ENCODE measurements at regions of chr20 and their contacts with region 1.

Region 1: GRCh38 chr20:815914-816606 is 17.5 kb upstream of the FAM110A start:
- DNase-seq: peak; percentile 70
- ATAC-seq: peak; percentile 68
- H3K4me3 ChIP-seq: no peak overlapping the region
- H3K27ac ChIP-seq: no peak overlapping the region
- H3K4me1 ChIP-seq: no peaks in the 10 kb centered on the region
- H3K27me3 ChIP-seq: no peaks in the 10 kb centered on the region
- CTCF ChIP-seq: peak; percentile 97
- EP300 ChIP-seq: no peak
- POLR2A ChIP-seq: no peak
- RAD21 ChIP-seq: peak; percentile 91

Region 2: DNA sequence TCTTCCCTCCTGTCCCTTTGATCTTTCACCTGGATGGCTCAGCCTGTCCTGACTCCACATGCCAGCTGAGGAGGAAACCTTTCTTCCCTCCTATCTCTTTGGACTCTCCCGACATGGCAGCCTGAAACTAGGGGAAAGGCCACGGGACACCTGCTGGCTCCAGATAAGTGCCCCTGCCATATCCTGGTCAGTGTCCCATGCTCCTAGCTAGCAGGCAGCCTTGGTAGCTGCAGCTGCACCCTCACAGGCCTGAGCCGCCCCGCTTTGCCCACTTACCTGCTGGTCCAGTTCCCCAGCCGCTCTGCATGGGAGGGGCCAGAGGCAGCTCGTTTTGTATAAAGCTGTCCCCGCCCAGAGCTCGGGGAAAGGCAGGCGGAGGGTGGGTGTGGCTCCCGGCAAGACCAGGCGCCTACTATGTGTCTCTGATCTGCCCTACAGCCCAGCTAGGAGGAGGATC is 40.4 kb before region 1 on chr20:
- CTCF ChIA-PET with region 1: no interaction called
- POLR2A ChIA-PET with region 1: no interaction called
- in situ Hi-C with region 1: no loop called
- intact Hi-C with region 1: no loop called
- DNase-seq: no peak
- ATAC-seq: no peak; the same call in 2 of the 3 replicates
- H3K4me3 ChIP-seq: no peak overlapping the region
- H3K27ac ChIP-seq: no peak overlapping the region
- H3K4me1 ChIP-seq: no peaks in the 10 kb centered on the region
- H3K27me3 ChIP-seq: peaks cover 4 to 60% of the 10 kb centered on the region in 2 experiments; a peak in 4 of 5 replicates
- CTCF ChIP-seq: no peak
- EP300 ChIP-seq: no peak
- POLR2A ChIP-seq: no peak
- RAD21 ChIP-seq: no peak

Region 3: DNA sequence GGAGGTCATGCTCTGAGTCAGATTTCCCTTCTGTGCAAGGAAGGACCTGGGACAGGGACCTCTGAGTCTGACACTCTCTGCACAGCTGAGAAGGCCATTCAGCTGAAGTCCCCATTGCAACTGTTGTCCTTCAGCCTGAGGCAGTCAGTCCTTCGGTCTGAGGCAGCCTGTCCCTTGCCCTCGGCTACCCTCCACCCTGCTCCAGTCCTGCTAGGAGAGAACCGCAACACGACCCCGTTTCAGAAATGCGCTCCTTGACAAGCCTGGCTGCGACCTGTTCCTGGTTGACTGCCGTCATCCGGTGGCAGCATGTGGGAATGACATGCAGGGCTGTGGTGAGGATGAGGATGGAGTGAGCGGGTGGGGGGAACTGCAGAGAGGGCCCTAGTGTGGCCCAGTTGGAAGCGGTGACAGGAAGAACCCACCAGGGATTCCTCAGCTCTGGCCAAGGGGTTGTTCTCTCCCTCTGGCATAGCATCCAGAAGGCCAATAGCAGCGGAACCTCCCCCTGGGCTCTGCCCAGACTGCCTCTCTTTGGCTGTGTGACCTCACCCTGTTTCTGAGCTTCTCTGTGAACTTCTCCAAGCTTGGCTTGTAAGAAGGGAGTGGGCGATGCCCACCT is 140.4 kb after region 1 on chr20:
- CTCF ChIA-PET with region 1: interaction called, 185 read pairs
- POLR2A ChIA-PET with region 1: interaction called, 4 read pairs
- in situ Hi-C with region 1: loop called (anchors 5 kb)
- intact Hi-C with region 1: loop called (anchors 1 kb)
- DNase-seq: peak; percentile 74
- ATAC-seq: peak; percentile 87
- H3K4me3 ChIP-seq: no peak overlapping the region
- H3K27ac ChIP-seq: no peak overlapping the region
- H3K4me1 ChIP-seq: no peaks in the 10 kb centered on the region
- H3K27me3 ChIP-seq: peaks cover 12 to 39% of the 10 kb centered on the region in 2 experiments
- CTCF ChIP-seq: peak; percentile 100
- EP300 ChIP-seq: no peak
- POLR2A ChIP-seq: no peak
- RAD21 ChIP-seq: peak; percentile 99

Region 4: DNA sequence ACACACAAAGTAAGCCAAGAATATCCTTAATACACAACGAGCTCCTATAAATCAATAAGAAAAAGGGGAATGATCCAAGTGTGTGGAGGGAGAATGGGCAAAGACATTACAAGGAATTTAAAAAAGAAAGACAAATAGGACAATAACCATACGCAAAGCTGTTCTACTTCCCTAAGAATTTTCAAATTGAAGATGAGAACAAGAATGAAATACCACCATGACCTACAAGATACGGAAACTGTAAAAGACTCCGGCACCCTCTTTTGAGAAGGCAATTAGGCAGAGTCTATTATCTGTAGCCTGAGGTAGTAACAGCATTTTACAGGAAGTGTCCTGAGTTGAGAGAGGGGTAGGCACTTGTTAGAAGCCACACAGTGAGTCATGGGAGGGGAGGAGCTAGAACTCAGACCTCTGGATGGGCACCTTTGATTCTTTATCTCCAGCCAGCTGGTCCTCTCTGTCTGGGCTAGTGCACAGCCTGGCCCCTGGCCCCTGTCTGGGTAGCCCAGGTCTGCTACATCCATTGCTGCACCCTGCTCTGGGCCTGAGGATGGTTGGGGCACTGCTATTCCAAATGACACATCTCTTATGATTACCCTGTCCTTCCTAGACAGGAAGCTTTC is 170.8 kb after region 1 on chr20:
- CTCF ChIA-PET with region 1: no interaction called
- POLR2A ChIA-PET with region 1: no interaction called
- in situ Hi-C with region 1: no loop called
- intact Hi-C with region 1: no loop called
- DNase-seq: no peak
- ATAC-seq: no peak; the same call in 2 of the 3 replicates
- H3K4me3 ChIP-seq: no peak overlapping the region
- H3K27ac ChIP-seq: no peak overlapping the region
- H3K4me1 ChIP-seq: no peaks in the 10 kb centered on the region
- H3K27me3 ChIP-seq: peaks cover 3 to 34% of the 10 kb centered on the region in 2 experiments; a peak in 4 of 5 replicates
- CTCF ChIP-seq: no peak
- EP300 ChIP-seq: no peak
- POLR2A ChIP-seq: no peak
- RAD21 ChIP-seq: no peak

Region 5: DNA sequence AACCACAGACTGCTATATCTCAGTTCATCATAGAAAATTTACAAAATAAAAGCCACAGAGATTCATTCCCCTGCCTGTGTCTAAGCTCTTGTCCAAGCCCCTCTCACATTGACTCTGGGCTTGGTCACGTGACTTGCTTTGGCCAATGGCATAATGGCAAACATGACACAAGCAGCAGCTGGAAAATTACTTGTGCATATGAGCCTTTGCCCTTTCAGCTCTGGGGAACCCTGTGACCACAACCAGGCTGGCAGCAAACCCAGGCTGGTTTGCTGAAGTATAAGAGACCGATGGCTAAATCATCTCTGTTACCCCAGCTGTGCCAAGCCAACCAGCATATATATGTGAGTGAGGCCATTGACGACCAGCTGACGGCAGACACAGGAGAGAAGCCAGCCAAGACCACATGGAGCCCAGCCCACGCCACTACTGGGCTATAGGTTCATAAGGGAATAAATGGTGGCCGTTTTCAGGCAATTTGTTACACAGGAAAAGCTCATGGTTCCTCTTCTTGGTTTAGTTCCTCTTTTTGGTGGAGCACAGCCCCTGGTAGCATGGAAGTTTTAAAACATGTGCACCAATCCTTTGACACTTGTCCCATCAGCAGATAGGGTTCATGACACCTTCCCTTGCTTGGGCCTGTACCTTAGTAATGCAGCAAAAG is 217.8 kb after region 1 on chr20:
- CTCF ChIA-PET with region 1: no interaction called
- POLR2A ChIA-PET with region 1: no interaction called
- in situ Hi-C with region 1: no loop called
- intact Hi-C with region 1: no loop called
- DNase-seq: no peak
- ATAC-seq: no peak
- H3K4me3 ChIP-seq: no peak overlapping the region
- H3K27ac ChIP-seq: no peak overlapping the region
- H3K4me1 ChIP-seq: peaks cover 12% of the 10 kb centered on the region
- H3K27me3 ChIP-seq: 0 out of 5 replicates have a peak, but pooled peaks cover 0 to 4% of the 10 kb centered on the region in 2 experiments
- CTCF ChIP-seq: no peak
- EP300 ChIP-seq: no peak
- POLR2A ChIP-seq: no peak
- RAD21 ChIP-seq: no peak

Region 6: GRCh38 chr20:1108437-1108920 is 292.4 kb after region 1 on chr20:
- CTCF ChIA-PET with region 1: no interaction called
- POLR2A ChIA-PET with region 1: no interaction called
- in situ Hi-C with region 1: loop called (anchors 10 kb)
- intact Hi-C with region 1: loop called (anchors 5 kb)
- DNase-seq: peak; percentile 60
- ATAC-seq: peak; percentile 96
- H3K4me3 ChIP-seq: no peak overlapping the region
- H3K27ac ChIP-seq: no peak overlapping the region
- H3K4me1 ChIP-seq: no peaks in the 10 kb centered on the region
- H3K27me3 ChIP-seq: no peaks in the 10 kb centered on the region
- CTCF ChIP-seq: peak; percentile 95
- EP300 ChIP-seq: no peak
- POLR2A ChIP-seq: no peak
- RAD21 ChIP-seq: peak; percentile 75

Measured in HepG2 (cell line).